GM10248 (cell line): ENCODE measurements at regions of chr7 and their contacts with region 1.

Region 1: GRCh38 chr7:100101016-100101862 is at the starts of genes AP4M1 and MCM7:
- DNase-seq: peak; percentile 99
- CTCF ChIP-seq: no peak

Region 2: DNA sequence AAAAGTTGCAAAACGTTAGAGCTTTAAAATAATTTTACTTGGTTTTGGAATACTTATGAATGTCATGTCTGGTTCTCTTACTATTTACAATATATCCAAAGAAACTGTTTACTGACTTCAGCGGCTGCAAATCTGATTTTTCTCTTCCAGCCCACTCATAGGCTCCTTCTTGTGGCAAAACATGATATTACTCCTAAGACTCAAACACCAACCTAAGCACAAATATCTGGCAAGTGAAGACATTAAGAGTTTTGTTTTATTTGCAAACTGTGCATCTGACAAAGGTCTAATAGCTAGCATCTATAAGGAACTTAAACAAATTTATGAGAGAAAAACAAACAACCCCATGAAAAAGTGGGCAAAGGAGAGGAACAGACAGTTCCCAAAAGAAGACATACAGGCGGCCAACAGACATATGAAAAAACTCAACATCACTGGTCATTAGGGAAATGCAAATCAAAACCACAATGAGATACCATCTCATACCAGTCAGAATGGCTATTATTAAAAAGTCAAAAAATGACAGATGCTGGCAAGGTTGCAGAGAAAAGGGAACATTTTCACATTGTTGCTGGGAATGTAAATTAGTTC is 151.5 kb before region 1 on chr7:
- CTCF ChIA-PET with region 1: no interaction called
- POLR2A ChIA-PET with region 1: no interaction called
- DNase-seq: no peak
- CTCF ChIP-seq: peak; percentile 12

Region 3: DNA sequence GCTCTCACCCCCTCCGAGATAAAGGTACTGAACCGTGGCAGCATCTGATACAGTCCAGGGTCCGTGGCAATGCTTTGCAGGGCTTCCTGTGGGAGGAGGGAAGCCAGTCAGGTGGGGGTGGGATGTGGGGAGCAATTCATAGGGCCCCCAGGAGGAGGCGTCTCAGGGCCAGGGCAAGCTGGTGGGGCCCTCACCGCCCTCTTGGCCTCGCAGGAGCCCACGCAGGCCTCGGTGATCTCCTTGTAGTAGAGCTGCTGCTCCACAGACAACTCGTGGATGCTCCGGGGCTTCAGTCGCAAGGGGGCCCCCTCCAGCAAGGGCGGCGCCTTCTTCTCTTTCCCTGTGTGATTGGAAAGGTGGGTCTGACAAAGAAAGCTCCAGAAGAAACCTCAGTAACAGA is 10.7 kb after region 1 on chr7:
- CTCF ChIA-PET with region 1: interaction called, 14 read pairs
- POLR2A ChIA-PET with region 1: no interaction called
- DNase-seq: no peak
- CTCF ChIP-seq: no peak